CD4-positive, alpha-beta T cell (primary cell): ENCODE measurements at regions of chr13 and their contacts with region 1.

Region 1: DNA sequence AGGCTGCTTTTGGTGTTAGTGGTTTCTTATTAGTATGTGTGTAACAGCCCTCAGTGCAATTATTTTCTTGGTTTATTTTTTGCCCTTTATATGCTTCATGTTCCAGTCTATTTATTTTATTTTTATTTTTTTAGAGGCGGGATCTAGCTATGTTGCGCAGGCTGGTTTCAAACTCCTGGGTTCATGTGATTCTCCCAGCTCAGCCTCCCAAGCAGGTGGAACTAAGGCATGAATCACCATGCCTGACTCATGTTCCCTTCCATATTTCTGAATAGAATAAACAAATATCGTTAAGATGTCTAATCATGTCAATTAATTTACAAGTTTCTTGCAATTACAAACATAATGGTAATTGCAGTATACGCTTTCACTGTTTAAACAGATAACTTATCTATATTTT is 11.7 kb downstream of the SKA3 start:
- DNase-seq: no peak
- ATAC-seq: no peak
- H3K4me3 ChIP-seq: no peak overlapping the region
- H3K4me3 Mint-ChIP-seq: no peak overlapping the region
- H3K27ac ChIP-seq: no peak overlapping the region
- H3K27ac Mint-ChIP-seq: no peak overlapping the region
- H3K4me1 ChIP-seq: no peaks in the 10 kb centered on the region
- H3K4me1 Mint-ChIP-seq: no peaks in the 10 kb centered on the region
- H3K27me3 ChIP-seq: no peaks in the 10 kb centered on the region
- H3K27me3 Mint-ChIP-seq: no peaks in the 10 kb centered on the region
- CTCF ChIP-seq: no peak

Region 2: GRCh38 chr13:21124852-21125251 is 39.8 kb before region 1 on chr13:
- CTCF ChIA-PET with region 1: no interaction called
- POLR2A ChIA-PET with region 1: no interaction called
- intact Hi-C with region 1: no loop called
- DNase-seq: no peak
- ATAC-seq: no peak
- H3K4me3 ChIP-seq: no peak overlapping the region
- H3K4me3 Mint-ChIP-seq: no peak overlapping the region
- H3K27ac ChIP-seq: no peak overlapping the region
- H3K27ac Mint-ChIP-seq: no peak overlapping the region
- H3K4me1 ChIP-seq: no peaks in the 10 kb centered on the region
- H3K4me1 Mint-ChIP-seq: no peaks in the 10 kb centered on the region
- H3K27me3 ChIP-seq: no peaks in the 10 kb centered on the region
- H3K27me3 Mint-ChIP-seq: peaks cover 3% of the 10 kb centered on the region
- CTCF ChIP-seq: no peak

Region 3: GRCh38 chr13:21149568-21149967 is 15.1 kb before region 1 on chr13:
- CTCF ChIA-PET with region 1: interaction called, 4 read pairs
- POLR2A ChIA-PET with region 1: no interaction called
- intact Hi-C with region 1: loop called in 1 of 2 experiments (anchors 2 kb)
- DNase-seq: no peak
- ATAC-seq: no peak
- H3K4me3 ChIP-seq: no peak overlapping the region
- H3K4me3 Mint-ChIP-seq: no peak overlapping the region
- H3K27ac ChIP-seq: no peak overlapping the region
- H3K27ac Mint-ChIP-seq: no peak overlapping the region
- H3K4me1 ChIP-seq: peaks cover 3% of the 10 kb centered on the region
- H3K4me1 Mint-ChIP-seq: peaks cover 2% of the 10 kb centered on the region
- H3K27me3 ChIP-seq: no peaks in the 10 kb centered on the region
- H3K27me3 Mint-ChIP-seq: no peaks in the 10 kb centered on the region
- CTCF ChIP-seq: no peak

Region 4: DNA sequence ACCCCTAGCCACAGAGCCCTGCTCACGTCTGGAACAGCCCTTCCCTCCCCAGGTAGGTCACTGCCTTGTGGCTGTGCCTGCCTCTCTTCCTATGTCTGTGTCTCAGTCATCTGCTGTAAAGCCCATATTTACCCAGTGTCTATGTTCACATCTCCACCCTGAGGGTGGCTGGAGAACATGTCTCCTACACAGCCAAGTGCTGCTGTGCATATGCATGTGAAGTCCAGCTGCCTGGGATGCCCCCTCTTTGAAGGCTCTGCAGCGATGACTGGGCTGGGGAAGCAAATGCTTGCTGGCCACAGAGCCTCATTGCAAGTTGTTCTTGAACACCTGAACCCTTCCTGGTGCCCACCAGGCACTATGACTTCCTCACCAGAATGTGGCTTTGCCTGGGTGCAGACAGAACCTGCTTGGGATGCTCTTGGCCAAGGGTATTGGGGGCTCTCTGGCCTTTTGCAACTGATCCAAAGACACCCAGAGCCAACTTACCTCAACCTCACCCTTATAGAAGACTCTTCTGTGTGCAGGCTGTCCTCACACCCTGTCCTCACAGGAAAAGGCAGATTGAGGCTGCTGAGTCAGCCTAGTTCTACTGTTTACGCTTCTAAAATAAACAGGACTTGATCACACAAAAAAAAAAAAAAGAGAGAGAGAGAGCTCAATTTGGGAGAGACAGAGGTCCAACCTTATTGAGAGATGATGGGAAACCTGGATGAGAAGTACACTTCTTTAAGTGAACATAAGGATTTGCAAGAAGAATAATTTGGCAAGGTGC is 38.3 kb after region 1 on chr13:
- CTCF ChIA-PET with region 1: no interaction called
- POLR2A ChIA-PET with region 1: no interaction called
- intact Hi-C with region 1: no loop called
- DNase-seq: no peak
- ATAC-seq: no peak
- H3K4me3 ChIP-seq: no peak overlapping the region
- H3K4me3 Mint-ChIP-seq: no peak overlapping the region
- H3K27ac ChIP-seq: no peak overlapping the region
- H3K27ac Mint-ChIP-seq: no peak overlapping the region
- H3K4me1 ChIP-seq: no peaks in the 10 kb centered on the region
- H3K4me1 Mint-ChIP-seq: no peaks in the 10 kb centered on the region
- H3K27me3 ChIP-seq: no peaks in the 10 kb centered on the region
- H3K27me3 Mint-ChIP-seq: peaks cover 13% of the 10 kb centered on the region
- CTCF ChIP-seq: no peak